ENCODE measurements at regions of chr12 and their contacts with region 1.

Region 1: GRCh38 chr12:123150744-123151456 is at the start of gene PITPNM2:
- DNase-seq: peak; percentile 68
- ATAC-seq: peak; percentile 87
- H3K4me3 Mint-ChIP-seq: peak within 1 kb of the TSS; percentile 81
- H3K27ac Mint-ChIP-seq: peak within 1 kb of the TSS; percentile 65
- H3K4me1 Mint-ChIP-seq: peaks cover 31% of the 10 kb centered on the region
- H3K27me3 Mint-ChIP-seq: no peaks in the 10 kb centered on the region
- CTCF ChIP-seq: no peak
- total RNA-seq, gene PITPNM2: 12.9 and 13.7 TPM in 2 replicates

Region 2: GRCh38 chr12:122980183-122981046 is 170.5 kb before region 1 on chr12 and contains the start of gene ARL6IP4:
- CTCF ChIA-PET with region 1: interaction called, 4 read pairs
- POLR2A ChIA-PET with region 1: interaction called, 4 read pairs
- intact Hi-C with region 1: loop called (anchors 5 kb)
- DNase-seq: peak; percentile 72
- ATAC-seq: peak; percentile 83
- H3K4me3 Mint-ChIP-seq: peak within 1 kb of the TSS; percentile 88
- H3K27ac Mint-ChIP-seq: peak within 1 kb of the TSS; percentile 88
- H3K4me1 Mint-ChIP-seq: peaks cover 55% of the 10 kb centered on the region
- H3K27me3 Mint-ChIP-seq: no peaks in the 10 kb centered on the region
- CTCF ChIP-seq: no peak
- total RNA-seq, gene ARL6IP4: 163 and 178 TPM in 2 replicates

Region 3: GRCh38 chr12:123043536-123044001 is 107.3 kb before region 1 on chr12:
- CTCF ChIA-PET with region 1: interaction called, 33 read pairs
- POLR2A ChIA-PET with region 1: no interaction called
- intact Hi-C with region 1: loop called (anchors 1 kb)
- DNase-seq: peak; percentile 51
- ATAC-seq: peak; percentile 97
- H3K4me3 Mint-ChIP-seq: no peak overlapping the region
- H3K27ac Mint-ChIP-seq: no peak overlapping the region
- H3K4me1 Mint-ChIP-seq: peaks cover 16% of the 10 kb centered on the region
- H3K27me3 Mint-ChIP-seq: no peaks in the 10 kb centered on the region
- CTCF ChIP-seq: no peak

Region 4: DNA sequence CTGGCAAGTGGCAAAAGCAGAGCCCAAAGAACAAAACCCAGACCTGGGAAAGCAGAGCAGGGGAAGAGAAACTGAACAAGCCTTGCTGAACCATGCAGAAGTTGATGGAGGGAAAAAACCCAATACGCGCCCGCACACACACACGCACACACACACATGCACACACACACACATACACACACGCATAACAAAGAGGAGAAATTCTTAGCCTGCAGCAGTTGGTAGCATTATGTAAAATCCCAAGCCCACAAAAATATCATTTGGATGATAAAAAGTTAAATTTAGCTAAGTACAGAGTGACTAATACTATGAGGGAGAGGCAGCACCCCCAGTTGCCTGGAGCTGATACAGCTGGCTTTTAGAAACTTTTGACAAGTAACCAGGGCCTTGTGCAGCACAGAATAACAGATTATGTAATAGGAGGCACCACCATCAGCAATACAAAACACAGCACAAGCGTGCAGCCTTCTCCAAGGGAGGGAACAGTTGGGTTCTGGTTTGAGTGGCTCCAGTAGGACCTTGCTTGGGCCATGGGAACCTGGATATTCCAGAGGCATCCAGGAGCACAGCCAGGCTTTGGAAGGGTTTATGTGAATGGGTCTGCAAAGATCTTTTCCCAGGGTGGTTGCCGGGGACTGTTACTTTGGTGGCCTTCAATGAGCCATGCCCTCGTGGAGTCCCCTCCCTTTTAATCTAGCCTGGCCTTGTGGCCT is 35.3 kb before region 1 on chr12:
- CTCF ChIA-PET with region 1: no interaction called
- POLR2A ChIA-PET with region 1: interaction called, 5 read pairs
- intact Hi-C with region 1: loop called (anchors 2 kb)
- DNase-seq: peak; percentile 32
- ATAC-seq: peak; percentile 70
- H3K4me3 Mint-ChIP-seq: peak overlapping the region; percentile 29
- H3K27ac Mint-ChIP-seq: peak overlapping the region; percentile 75
- H3K4me1 Mint-ChIP-seq: peaks cover 81% of the 10 kb centered on the region
- H3K27me3 Mint-ChIP-seq: no peaks in the 10 kb centered on the region
- CTCF ChIP-seq: no peak

Region 5: DNA sequence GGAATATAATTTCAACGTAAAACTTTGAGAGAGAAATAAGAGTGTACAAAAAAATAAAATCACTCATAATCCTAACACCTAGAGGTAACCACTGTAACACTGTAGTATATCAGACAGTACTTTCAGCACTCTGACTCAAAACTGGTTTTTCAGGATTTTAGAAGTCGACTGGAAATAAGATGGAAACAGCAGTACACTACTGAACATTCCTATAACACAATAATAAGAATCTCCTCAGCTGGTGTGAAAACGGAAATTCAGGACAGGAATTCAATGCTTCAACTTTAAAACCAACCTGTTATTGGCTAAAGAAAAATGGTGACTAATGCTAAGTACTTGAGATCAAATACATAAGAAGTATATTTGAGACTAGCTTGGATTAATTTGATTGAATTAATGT is 12.3 kb after region 1 on chr12:
- CTCF ChIA-PET with region 1: no interaction called
- POLR2A ChIA-PET with region 1: interaction called, 13 read pairs
- intact Hi-C with region 1: no loop called
- DNase-seq: no peak
- ATAC-seq: no peak
- H3K4me3 Mint-ChIP-seq: no peak overlapping the region
- H3K27ac Mint-ChIP-seq: no peak overlapping the region
- H3K4me1 Mint-ChIP-seq: peaks cover 3% of the 10 kb centered on the region
- H3K27me3 Mint-ChIP-seq: no peaks in the 10 kb centered on the region
- CTCF ChIP-seq: no peak

Region 6: DNA sequence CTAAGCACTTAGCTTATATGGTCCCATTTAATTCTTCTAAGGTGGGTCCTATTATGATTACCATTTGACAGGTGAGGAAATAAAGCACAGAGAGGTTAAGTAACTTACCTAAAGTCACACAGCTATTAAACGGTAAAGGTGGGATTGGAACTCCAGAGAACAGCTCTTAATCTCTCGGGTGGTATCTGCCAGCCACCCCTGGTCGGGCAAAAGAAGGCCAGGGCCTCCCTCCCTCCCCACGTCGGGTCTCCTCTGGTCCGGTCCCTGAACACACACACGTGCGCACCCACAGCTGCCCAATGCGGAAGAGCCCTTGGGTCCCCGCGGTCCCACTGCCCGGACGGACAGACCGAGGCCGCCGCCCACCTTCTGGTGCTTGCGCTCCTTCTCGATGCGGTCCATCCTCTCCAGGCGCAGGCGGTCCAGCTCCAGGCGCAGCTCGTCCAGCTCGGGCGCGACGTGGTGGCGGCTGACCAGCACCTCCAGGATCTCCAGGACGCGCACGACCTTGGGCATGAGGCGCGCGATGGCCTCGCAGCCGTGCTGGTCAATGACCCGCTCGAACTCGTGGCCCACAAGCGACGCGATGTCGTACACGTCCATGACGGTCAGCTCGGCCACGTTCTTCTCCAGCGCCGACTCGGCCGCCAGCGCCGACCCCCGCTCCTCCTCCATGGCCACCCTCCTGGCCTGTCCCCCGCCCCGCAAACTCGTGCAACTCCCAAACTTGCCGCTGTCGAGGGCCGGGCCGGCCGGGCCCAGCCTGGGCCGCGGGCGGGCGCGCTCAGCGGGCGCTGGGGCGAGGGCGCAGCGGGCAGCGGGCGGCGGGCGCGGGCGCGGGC is 382.1 kb after region 1 on chr12:
- CTCF ChIA-PET with region 1: no interaction called
- POLR2A ChIA-PET with region 1: no interaction called
- intact Hi-C with region 1: no loop called
- DNase-seq: no peak
- ATAC-seq: peak; percentile 29
- H3K4me3 Mint-ChIP-seq: peak overlapping the region; percentile 80
- H3K27ac Mint-ChIP-seq: no peak overlapping the region
- H3K4me1 Mint-ChIP-seq: peaks cover 20% of the 10 kb centered on the region
- H3K27me3 Mint-ChIP-seq: no peaks in the 10 kb centered on the region
- CTCF ChIP-seq: no peak

Measured in activated B cell treated with CpG ODN at 0.5 μM for 24 hours (primary cell).